ENCODE measurements at regions of chr15 and their contacts with region 1.

Region 1: DNA sequence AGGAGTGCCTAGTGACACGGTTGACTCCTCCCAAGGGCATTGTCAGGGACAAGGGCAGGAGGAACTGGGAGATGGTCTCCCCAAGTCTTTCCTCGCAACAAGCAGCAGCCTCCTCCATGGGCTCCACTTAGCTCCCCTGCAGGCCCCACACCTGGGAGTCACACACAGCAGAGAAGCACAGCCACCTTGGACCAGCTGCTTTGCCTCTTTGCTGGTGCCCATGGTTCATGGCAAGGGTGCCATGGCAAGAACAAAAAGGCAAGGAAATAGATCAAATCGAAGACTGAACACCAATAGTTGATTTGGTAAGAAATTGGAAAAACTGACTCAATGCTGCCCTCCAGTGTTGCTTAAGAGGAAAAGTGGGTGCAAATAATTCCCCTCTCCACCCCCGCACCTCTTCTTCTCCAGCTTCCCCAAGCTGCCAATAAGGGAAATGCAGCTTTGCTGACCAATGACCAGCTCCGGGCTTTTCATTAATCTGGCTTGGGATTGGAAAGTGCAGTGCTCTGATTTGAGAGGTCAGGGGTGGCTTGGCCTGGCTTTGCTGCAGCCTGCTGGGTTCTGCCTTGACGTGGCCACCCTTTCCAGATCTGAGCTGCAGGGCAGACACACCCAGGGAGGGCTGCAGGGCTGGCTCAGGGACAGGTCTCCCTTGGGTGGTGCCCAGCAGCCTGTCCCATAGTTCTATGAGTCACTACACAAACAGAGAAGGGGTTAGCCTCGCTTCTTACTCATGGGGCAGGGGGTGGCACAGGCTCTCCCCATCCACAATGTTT is 162.0 kb downstream of the KLF13 start:
- DNase-seq: peak; percentile 53
- ATAC-seq: peak; percentile 76
- H3K4me3 Mint-ChIP-seq: no peak overlapping the region
- H3K27ac Mint-ChIP-seq: no peak overlapping the region
- H3K4me1 Mint-ChIP-seq: peaks cover 5% of the 10 kb centered on the region; the same call in 1 of the 2 replicates
- H3K27me3 Mint-ChIP-seq: peaks cover 23% of the 10 kb centered on the region
- CTCF ChIP-seq: peak; percentile 71

Region 2: GRCh38 chr15:31215490-31216214 is 273.0 kb before region 1 on chr15:
- CTCF ChIA-PET with region 1: interaction called, 32 read pairs
- POLR2A ChIA-PET with region 1: no interaction called
- DNase-seq: peak; percentile 87
- ATAC-seq: peak; percentile 76
- H3K4me3 Mint-ChIP-seq: peak overlapping the region; percentile 58
- H3K27ac Mint-ChIP-seq: no peak overlapping the region
- H3K4me1 Mint-ChIP-seq: peaks cover 12% of the 10 kb centered on the region
- H3K27me3 Mint-ChIP-seq: peaks cover 6% of the 10 kb centered on the region
- CTCF ChIP-seq: peak; percentile 69

Region 3: DNA sequence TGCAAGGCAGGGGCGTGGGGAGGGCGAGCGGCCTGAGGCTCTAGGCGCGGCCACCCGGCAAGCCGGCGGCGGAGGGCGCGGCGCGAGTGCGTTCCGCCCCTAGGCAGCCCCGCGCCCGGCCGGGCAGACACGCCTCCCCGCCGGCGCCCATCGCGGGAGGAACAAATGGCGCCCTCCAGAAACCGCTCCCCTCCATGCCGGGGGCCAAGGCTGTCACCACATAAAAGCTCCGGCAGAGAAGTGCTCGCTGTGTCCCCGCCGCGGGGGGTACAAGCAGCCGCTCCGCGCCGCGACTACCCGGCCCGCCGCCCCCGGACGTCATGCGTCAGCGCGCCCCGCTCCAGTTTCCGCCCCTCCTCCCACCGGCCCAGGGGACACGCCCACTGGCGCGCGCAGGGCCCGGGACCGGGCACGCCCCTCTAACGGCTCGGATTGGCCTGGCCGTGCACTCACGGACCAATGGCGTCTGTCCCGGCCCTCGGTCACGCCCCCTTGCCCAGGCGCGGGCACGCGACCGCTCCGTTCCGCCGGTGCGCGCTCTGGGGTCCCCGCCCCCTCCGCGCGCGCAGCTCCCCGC is 162.4 kb before region 1 on chr15:
- CTCF ChIA-PET with region 1: interaction called, 10 read pairs
- POLR2A ChIA-PET with region 1: no interaction called
- DNase-seq: peak; percentile 99
- ATAC-seq: peak; percentile 85
- H3K4me3 Mint-ChIP-seq: peak overlapping the region; percentile 78
- H3K27ac Mint-ChIP-seq: no peak overlapping the region
- H3K4me1 Mint-ChIP-seq: peaks cover 39% of the 10 kb centered on the region
- H3K27me3 Mint-ChIP-seq: peaks cover 17% of the 10 kb centered on the region
- CTCF ChIP-seq: no peak

Region 4: GRCh38 chr15:31396881-31397560 is 91.6 kb before region 1 on chr15:
- CTCF ChIA-PET with region 1: interaction called, 13 read pairs
- POLR2A ChIA-PET with region 1: no interaction called
- DNase-seq: peak; percentile 96
- ATAC-seq: peak; percentile 89
- H3K4me3 Mint-ChIP-seq: peak overlapping the region; percentile 31
- H3K27ac Mint-ChIP-seq: peak overlapping the region; percentile 93
- H3K4me1 Mint-ChIP-seq: peaks cover 33% of the 10 kb centered on the region
- H3K27me3 Mint-ChIP-seq: peaks cover 23% of the 10 kb centered on the region
- CTCF ChIP-seq: no peak

Region 5: GRCh38 chr15:31458591-31459399 is 29.8 kb before region 1 on chr15:
- CTCF ChIA-PET with region 1: interaction called, 25 read pairs
- POLR2A ChIA-PET with region 1: no interaction called
- DNase-seq: no peak
- ATAC-seq: no peak
- H3K4me3 Mint-ChIP-seq: no peak overlapping the region
- H3K27ac Mint-ChIP-seq: no peak overlapping the region
- H3K4me1 Mint-ChIP-seq: peaks cover 17% of the 10 kb centered on the region
- H3K27me3 Mint-ChIP-seq: no peaks in the 10 kb centered on the region
- CTCF ChIP-seq: no peak

Measured in WTC11 (cell line).